HCT116 (cell line): ENCODE measurements at regions of chr11 and their contacts with region 1.

Region 1: GRCh38 chr11:20127671-20128527 is 32.4 kb downstream of the DBX1 start:
- DNase-seq: peak; percentile 44
- ATAC-seq: peak; percentile 92
- H3K4me3 ChIP-seq: no peak overlapping the region
- H3K27ac ChIP-seq: no peak overlapping the region
- H3K4me1 ChIP-seq: peaks cover 0 to 9% of the 10 kb centered on the region in 2 experiments; a peak in 1 of 4 replicates
- H3K27me3 ChIP-seq: no peaks in the 10 kb centered on the region
- CTCF ChIP-seq: peak; percentile 71 to 88 (median 83)
- POLR2A ChIP-seq: no peak
- RAD21 ChIP-seq: peak; percentile 88

Region 2: GRCh38 chr11:19742588-19743292 is 385.2 kb before region 1 on chr11:
- CTCF ChIA-PET with region 1: no interaction called
- POLR2A ChIA-PET with region 1: no interaction called
- RAD21 ChIA-PET with region 1: no interaction called
- intact Hi-C with region 1: loop called (anchors 5 kb)
- DNase-seq: peak; percentile 51
- ATAC-seq: peak; percentile 97
- H3K4me3 ChIP-seq: no peak overlapping the region
- H3K27ac ChIP-seq: no peak overlapping the region
- H3K4me1 ChIP-seq: no peaks in the 10 kb centered on the region
- H3K27me3 ChIP-seq: no peaks in the 10 kb centered on the region
- CTCF ChIP-seq: peak; percentile 81 to 90 (median 88); a peak in 5 of 6 replicates
- POLR2A ChIP-seq: no peak
- RAD21 ChIP-seq: peak; percentile 96

Region 3: GRCh38 chr11:19938169-19938856 is 189.6 kb before region 1 on chr11:
- CTCF ChIA-PET with region 1: interaction called, 9 read pairs
- POLR2A ChIA-PET with region 1: no interaction called
- RAD21 ChIA-PET with region 1: no interaction called
- intact Hi-C with region 1: loop called (anchors 2 kb)
- DNase-seq: peak; percentile 36
- ATAC-seq: peak; percentile 96
- H3K4me3 ChIP-seq: no peak overlapping the region
- H3K27ac ChIP-seq: no peak overlapping the region
- H3K4me1 ChIP-seq: no peaks in the 10 kb centered on the region
- H3K27me3 ChIP-seq: no peaks in the 10 kb centered on the region
- CTCF ChIP-seq: peak; percentile 52 to 93 (median 89); a peak in 5 of 6 replicates
- POLR2A ChIP-seq: no peak
- RAD21 ChIP-seq: peak; percentile 68

Region 4: GRCh38 chr11:20110908-20111669 is 16.8 kb before region 1 on chr11:
- CTCF ChIA-PET with region 1: interaction called, 14 read pairs
- POLR2A ChIA-PET with region 1: interaction called, 4 read pairs
- RAD21 ChIA-PET with region 1: interaction called in 1 of 2 experiments, 3 read pairs
- intact Hi-C with region 1: no loop called
- DNase-seq: peak; percentile 72
- ATAC-seq: peak; percentile 75
- H3K4me3 ChIP-seq: no peak overlapping the region
- H3K27ac ChIP-seq: no peak overlapping the region
- H3K4me1 ChIP-seq: peaks cover 14 to 27% of the 10 kb centered on the region in 2 experiments
- H3K27me3 ChIP-seq: no peaks in the 10 kb centered on the region
- CTCF ChIP-seq: peak; percentile 69 to 97 (median 87)
- POLR2A ChIP-seq: no peak
- RAD21 ChIP-seq: peak; percentile 81

Region 5: DNA sequence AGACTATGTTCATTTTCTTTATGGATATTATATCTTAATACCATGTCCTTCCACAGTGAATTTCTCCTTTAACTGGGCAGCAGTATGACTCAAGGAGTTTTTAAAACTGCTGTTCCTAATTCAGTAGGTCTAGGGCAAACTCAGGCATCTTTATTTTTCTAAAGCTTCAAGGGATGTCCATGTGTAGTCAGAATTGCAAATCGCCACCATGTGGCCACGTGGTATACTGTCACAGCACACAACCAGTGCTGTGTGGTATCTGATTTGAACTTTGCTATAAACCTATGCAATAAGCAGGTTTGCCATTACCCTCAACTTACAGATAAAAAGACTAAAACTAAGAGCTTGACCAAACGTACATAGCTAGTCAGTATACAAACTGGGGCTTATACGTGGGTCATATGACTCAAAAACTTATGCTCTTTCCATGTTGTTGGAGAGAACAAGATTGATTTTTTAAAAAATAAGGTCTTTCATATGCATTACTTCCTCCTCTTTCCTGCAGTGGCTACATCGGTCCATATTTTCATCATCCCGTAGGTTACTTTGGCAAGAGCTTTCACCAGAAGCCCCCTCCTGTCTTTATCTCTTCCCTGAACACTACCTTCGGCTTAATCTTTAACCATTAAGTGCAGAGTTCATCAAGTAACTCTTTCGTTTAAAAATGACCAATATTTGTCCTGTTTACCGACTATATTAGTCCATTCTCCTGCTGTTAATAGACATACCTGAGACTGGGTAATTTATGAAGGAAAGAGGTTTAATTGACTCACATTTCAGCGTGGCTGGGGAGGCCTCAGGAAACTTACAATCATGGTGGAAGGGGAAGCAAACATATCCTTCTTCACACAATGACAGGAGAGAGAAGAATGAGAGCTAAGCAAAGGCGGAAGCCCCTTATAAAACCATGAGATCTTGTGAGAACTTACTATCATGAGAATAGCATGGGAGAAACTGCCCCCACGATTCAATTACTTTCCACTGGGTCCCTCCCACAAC is 227.6 kb after region 1 on chr11:
- CTCF ChIA-PET with region 1: interaction called, 84 read pairs
- POLR2A ChIA-PET with region 1: no interaction called
- RAD21 ChIA-PET with region 1: interaction called in 1 of 2 experiments, 6 read pairs
- intact Hi-C with region 1: loop called (anchors 1 kb)
- DNase-seq: peak; percentile 54
- ATAC-seq: peak; percentile 89
- H3K4me3 ChIP-seq: no peak overlapping the region
- H3K27ac ChIP-seq: no peak overlapping the region
- H3K4me1 ChIP-seq: peaks cover 0 to 12% of the 10 kb centered on the region in 2 experiments; a peak in 2 of 4 replicates
- H3K27me3 ChIP-seq: no peaks in the 10 kb centered on the region
- CTCF ChIP-seq: peak; percentile 28 to 70 (median 64); a peak in 5 of 6 replicates
- POLR2A ChIP-seq: no peak
- RAD21 ChIP-seq: peak; percentile 35; the same call in 1 of the 2 replicates

Region 6: GRCh38 chr11:20671856-20672546 is 544.1 kb after region 1 on chr11:
- CTCF ChIA-PET with region 1: interaction called, 3 read pairs
- POLR2A ChIA-PET with region 1: no interaction called
- RAD21 ChIA-PET with region 1: no interaction called
- intact Hi-C with region 1: loop called (anchors 1 kb)
- DNase-seq: peak; percentile 0
- ATAC-seq: peak; percentile 68
- H3K4me3 ChIP-seq: no peak overlapping the region
- H3K27ac ChIP-seq: no peak overlapping the region
- H3K4me1 ChIP-seq: no peaks in the 10 kb centered on the region
- H3K27me3 ChIP-seq: peaks cover 7% of the 10 kb centered on the region; the same call in 1 of the 2 replicates
- CTCF ChIP-seq: peak in 2 of 3 experiments; percentile 30 to 35; a peak in 4 of 6 replicates
- POLR2A ChIP-seq: no peak
- RAD21 ChIP-seq: no peak